IMR-90 (cell line): ENCODE measurements at regions of chr5 and their contacts with region 1.

Region 1: GRCh38 chr5:135208903-135209721 is 175.1 kb upstream of the PITX1 start:
- DNase-seq: peak; percentile 98
- ATAC-seq: peak; percentile 87
- H3K4me3 ChIP-seq: no peak overlapping the region
- H3K27ac ChIP-seq: peak overlapping the region; percentile 98
- H3K4me1 ChIP-seq: peaks cover 40% of the 10 kb centered on the region
- H3K27me3 ChIP-seq: no peaks in the 10 kb centered on the region
- CTCF ChIP-seq: peak; percentile 54
- POLR2A ChIP-seq: no peak
- RAD21 ChIP-seq: peak; percentile 61

Region 2: GRCh38 chr5:135263022-135263668 is 54.0 kb after region 1 on chr5:
- CTCF ChIA-PET with region 1: interaction called, 9 read pairs
- POLR2A ChIA-PET with region 1: no interaction called
- dilution Hi-C with region 1: no loop called
- in situ Hi-C with region 1: no loop called
- intact Hi-C with region 1: loop called (anchors 2 kb)
- DNase-seq: no peak
- ATAC-seq: no peak
- H3K4me3 ChIP-seq: no peak overlapping the region
- H3K27ac ChIP-seq: peak overlapping the region; percentile 3; the same call in 1 of the 2 replicates
- H3K4me1 ChIP-seq: peaks cover 26% of the 10 kb centered on the region
- H3K27me3 ChIP-seq: no peaks in the 10 kb centered on the region
- CTCF ChIP-seq: no peak
- POLR2A ChIP-seq: no peak
- RAD21 ChIP-seq: no peak

Region 3: DNA sequence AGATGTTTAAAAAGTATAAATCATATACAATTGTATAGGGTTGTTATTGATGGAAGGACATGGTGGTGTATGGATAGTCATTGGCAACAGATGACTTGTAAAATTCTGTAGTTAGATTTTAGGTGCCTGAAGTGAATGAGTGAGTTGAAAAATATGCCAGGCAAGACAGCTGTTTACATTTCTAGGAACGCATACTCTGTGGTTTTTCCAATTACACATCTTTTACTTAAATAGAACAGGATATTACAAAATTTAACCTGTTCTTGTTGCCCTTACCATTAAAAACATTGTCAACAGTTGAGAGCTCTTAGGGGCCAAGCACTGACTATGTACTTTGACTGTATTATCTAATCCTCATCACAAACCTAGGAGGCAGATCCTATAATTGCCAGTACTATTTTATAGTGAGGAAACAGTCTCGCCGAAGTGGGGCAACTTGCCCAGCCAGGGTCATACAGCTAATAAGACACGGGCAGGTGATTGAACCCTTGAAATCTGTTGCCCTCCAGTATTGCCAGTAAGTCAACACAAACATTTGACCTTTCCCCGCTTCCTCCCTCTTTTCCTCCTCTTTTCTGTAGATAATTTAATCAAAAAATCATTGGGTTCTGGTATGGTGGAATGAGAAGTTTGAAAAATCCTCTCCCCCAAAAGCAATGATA is 101.3 kb after region 1 on chr5:
- CTCF ChIA-PET with region 1: no interaction called
- POLR2A ChIA-PET with region 1: no interaction called
- dilution Hi-C with region 1: no loop called
- in situ Hi-C with region 1: no loop called
- intact Hi-C with region 1: loop called (anchors 5 kb)
- DNase-seq: peak; percentile 91
- ATAC-seq: peak; percentile 37
- H3K4me3 ChIP-seq: no peak overlapping the region
- H3K27ac ChIP-seq: peak overlapping the region; percentile 63
- H3K4me1 ChIP-seq: peaks cover 29% of the 10 kb centered on the region
- H3K27me3 ChIP-seq: no peaks in the 10 kb centered on the region
- CTCF ChIP-seq: no peak
- POLR2A ChIP-seq: no peak
- RAD21 ChIP-seq: no peak

Region 4: DNA sequence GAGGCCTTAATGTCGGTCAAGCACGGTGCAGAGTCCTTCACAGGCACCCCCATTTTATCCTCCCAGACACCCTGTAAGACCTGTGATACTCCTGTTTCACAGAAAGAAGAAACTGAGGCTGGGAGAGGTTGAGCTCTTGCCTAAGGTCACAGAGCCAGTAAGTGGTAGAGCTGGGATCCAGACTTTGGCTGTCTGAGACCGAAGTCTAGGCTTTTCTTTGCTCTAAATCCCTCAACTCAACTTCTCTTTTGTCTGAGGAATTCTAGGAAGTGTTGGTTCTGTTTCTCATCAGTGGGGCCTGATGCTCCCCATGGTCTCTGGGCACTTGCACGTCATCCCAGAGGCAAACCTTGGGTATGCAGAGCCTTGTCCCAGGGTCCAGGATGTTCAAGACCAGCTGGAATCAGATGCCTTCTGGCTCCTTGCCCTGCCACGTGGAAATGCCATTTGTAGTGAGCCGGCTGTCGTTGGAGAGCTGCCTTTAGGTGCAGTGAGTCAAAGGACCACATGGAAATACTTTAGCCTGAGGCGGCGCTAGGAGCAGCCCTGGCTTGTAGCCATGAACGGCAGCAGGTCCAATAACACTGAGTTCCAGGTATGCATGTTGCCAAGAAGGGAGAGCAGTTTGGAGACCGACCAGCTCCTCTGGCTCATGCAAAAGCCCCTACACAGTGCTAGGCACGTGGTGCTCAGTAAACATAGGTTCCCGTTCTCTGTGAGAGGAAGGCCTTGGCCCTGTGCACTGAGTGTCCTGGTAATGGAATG is 228.9 kb after region 1 on chr5:
- CTCF ChIA-PET with region 1: no interaction called
- POLR2A ChIA-PET with region 1: no interaction called
- dilution Hi-C with region 1: no loop called
- in situ Hi-C with region 1: no loop called
- intact Hi-C with region 1: loop called (anchors 10 kb)
- DNase-seq: peak; percentile 96
- ATAC-seq: peak; percentile 50
- H3K4me3 ChIP-seq: no peak overlapping the region
- H3K27ac ChIP-seq: peak overlapping the region; percentile 16; the same call in 1 of the 2 replicates
- H3K4me1 ChIP-seq: peaks cover 24% of the 10 kb centered on the region
- H3K27me3 ChIP-seq: no peaks in the 10 kb centered on the region
- CTCF ChIP-seq: 0 out of 2 replicates have a peak, but pooled peaks have one; percentile 6
- POLR2A ChIP-seq: no peak
- RAD21 ChIP-seq: no peak